Lower leg skin (tissue), 4 donors: ENCODE measurements at regions of chr18 and their contacts with region 1.

Region 1: GRCh38 chr18:12744103-12744502 is 41.3 kb downstream of the PSMG2 start:
- DNase-seq: no peak
- H3K4me3 ChIP-seq: no peak overlapping the region
- CTCF ChIP-seq: peak in 1 of 3 donors; percentile 15
- POLR2A ChIP-seq: no peak

Region 2: DNA sequence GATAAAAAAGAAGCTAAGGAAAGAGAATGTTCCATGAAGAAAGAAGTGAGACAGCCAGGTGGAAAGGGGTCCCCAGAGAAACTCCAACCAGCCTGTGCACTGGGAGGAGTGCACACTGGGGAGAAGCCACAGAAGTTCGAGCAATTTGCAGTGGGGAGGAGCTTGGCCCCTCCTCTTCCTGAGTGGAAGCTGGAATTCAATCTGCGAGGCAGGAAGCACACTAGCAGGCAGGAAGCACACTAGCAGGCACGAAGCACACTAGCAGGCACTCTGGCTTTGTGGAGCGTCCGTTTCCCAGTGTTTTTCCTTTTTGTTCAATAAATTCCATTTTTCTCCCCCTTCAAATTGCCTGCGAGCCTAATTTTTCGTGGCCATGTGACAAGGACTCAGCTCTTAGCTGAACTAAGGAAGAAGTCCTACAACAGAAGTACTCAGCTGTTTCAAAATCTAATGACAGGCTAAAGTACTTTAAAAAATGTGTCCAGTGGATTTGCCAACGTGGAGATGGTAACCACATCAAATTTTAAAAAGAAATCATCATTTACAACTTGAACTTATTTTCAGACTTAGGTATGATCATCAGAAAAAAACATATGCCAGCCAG is 64.8 kb before region 1 on chr18:
- intact Hi-C with region 1: no loop called
- DNase-seq: peak; percentile 55 to 89
- H3K4me3 ChIP-seq: no peak overlapping the region
- CTCF ChIP-seq: no peak
- POLR2A ChIP-seq: no peak

Region 3: GRCh38 chr18:13481820-13482617 is 737.9 kb after region 1 on chr18:
- intact Hi-C with region 1: loop called (anchors 5 kb)
- DNase-seq: peak in 1 of 2 donors; percentile 70
- H3K4me3 ChIP-seq: no peak overlapping the region
- CTCF ChIP-seq: no peak
- POLR2A ChIP-seq: no peak